ENCODE measurements at regions of chr2 and their contacts with region 1.

Region 1: DNA sequence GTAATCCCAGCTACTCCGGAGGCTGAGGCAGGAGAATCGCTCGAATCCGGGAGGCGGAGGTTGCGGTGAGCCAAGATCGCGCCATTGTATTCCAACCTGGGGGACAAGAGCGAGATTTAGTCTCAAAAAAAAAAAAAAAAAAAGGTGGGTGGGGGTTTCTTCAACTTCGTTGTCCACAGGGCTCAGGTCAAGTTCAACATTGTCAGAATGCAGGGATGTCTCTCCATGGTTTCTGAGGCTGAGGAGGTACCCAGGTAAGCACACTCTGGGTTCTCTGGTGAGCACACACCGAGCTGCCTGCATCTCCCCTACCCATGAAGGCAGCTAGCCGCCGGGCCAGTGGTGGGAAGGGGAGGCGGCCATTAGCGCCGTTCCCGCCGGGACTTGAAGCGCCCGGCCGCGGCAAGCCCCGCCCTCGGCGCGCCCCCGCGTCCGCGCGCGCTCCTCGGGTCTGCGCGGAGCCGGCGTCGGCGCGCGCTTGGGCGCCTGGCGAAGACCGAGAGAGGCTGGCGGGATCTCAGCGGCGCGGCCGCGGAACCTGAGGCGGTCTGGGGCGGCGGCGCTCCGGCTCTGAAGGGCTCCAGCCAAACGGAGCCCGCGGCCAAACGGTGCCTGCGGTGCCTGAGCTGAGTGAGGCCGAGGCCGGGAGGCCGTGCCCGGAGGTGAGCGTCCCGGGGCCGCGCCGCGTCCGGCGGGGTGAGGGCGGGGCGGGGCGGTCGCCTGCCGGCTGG is at the start of gene UBXN2A:
- DNase-seq: peak; percentile 54 to 93 (median 66)
- ATAC-seq: peak; percentile 86
- H3K4me3 ChIP-seq: peak within 1 kb of the TSS; percentile 88
- H3K4me3 Mint-ChIP-seq: peak within 1 kb of the TSS; percentile 94
- H3K27ac ChIP-seq: peak within 1 kb of the TSS in 1 of 2 donors; percentile 15
- H3K27ac Mint-ChIP-seq: peak within 1 kb of the TSS; percentile 76
- H3K4me1 ChIP-seq: peaks cover 19% of the 10 kb centered on the region
- H3K4me1 Mint-ChIP-seq: peaks cover 30% of the 10 kb centered on the region
- H3K27me3 ChIP-seq: no peaks in the 10 kb centered on the region
- H3K27me3 Mint-ChIP-seq: no peaks in the 10 kb centered on the region
- CTCF ChIP-seq: no peak
- total RNA-seq, gene UBXN2A: 12.9 to 16.7 TPM

Region 2: DNA sequence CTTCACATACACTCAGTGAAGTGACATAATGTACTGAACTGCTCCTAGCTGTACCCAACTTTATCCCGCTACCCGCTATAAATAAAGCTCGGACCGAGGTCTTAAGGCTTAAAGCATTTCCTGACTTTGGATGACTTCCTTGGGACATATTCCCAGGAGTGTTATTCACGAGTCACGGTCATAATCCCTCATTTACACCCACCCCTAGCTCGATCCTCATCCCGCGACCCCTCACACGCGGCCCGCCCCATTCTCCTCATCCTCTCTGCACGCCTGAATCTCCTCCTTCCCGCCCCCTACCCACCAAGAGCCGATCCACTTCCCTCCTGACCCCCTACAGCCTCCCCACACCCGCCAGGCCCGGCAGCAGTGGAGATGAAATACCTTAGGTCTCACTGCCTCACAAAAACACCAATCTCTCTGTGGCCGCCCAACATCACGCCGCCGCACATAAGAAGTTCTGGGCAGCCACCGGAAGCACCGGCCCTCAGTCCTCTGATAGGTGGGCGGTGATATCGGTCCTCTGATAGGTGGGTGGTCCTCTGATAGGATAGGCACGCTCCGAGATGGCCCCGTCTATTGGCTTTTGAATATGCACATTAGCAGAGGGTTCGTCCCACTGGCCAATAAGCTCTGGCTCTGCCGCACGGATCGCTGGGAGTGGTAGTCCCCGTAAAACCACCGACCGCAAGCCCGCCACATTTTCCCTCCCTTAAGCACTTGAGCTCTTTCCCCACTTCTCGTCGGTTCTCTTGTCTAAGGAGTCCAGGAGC is 107.0 kb after region 1 on chr2 and contains the start of gene WDCP:
- CTCF ChIA-PET with region 1: no interaction called
- POLR2A ChIA-PET with region 1: interaction called, 5 read pairs
- intact Hi-C with region 1: loop called in 1 of 2 experiments (anchors 5 kb)
- DNase-seq: peak; percentile 82 to 98 (median 88)
- ATAC-seq: peak; percentile 99
- H3K4me3 ChIP-seq: peak within 1 kb of the TSS; percentile 83
- H3K4me3 Mint-ChIP-seq: peak within 1 kb of the TSS; percentile 94
- H3K27ac ChIP-seq: peak within 1 kb of the TSS in 1 of 2 donors; percentile 22
- H3K27ac Mint-ChIP-seq: peak within 1 kb of the TSS; percentile 79
- H3K4me1 ChIP-seq: peaks cover 30% of the 10 kb centered on the region
- H3K4me1 Mint-ChIP-seq: peaks cover 36% of the 10 kb centered on the region
- H3K27me3 ChIP-seq: peaks cover 10 to 21% of the 10 kb centered on the region in 2 experiments
- H3K27me3 Mint-ChIP-seq: peaks cover 10% of the 10 kb centered on the region
- CTCF ChIP-seq: no peak
- total RNA-seq, gene WDCP: 1.4 to 2.0 TPM

Region 3: DNA sequence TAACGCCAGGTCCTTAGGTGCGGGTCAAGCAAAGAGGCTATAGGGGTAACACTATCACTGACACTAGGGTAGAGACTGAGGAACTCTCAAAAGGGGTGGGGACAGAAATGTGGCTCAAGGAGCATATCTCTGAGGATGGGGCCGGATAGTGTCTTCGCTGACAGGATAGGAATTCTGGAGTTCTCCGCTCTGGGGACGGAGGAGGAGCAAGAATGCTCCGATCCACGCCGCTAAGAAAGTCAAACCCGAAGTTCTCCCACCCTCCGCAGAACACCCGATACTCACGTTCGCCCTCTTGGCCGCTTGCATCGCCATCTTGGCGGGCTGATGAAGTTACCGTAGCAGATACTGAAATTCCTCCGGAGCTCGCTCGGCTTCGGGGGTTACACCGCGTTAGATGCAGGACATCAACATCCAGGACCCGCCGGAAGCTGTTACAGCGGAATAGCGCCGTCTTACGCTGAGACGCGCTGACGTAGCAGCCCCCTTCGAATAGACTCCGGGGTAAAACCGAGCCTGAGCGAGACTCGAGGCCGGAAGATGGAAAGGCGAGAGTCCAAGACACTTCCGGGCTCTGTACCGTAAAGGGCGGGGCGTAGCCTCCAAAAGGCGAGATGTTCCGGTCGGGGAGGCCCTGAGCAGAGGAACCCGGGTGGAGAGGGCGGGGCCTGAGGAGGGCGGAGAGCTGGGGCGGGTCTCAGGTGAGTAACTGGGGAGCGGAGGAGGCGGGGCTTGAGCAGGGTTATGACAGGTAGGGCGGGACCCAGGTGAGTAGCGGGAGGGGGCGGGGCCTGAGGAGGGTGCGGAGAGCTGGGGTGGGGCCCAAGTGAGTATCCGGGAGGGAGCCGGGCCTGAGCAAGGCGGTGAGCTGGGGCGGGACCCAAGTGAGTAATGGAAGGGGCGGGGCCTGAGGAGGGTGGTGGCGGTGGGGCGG is 136.0 kb after region 1 on chr2 and contains the start of gene SF3B6:
- CTCF ChIA-PET with region 1: interaction called, 4 read pairs
- POLR2A ChIA-PET with region 1: interaction called, 9 read pairs
- intact Hi-C with region 1: loop called in 1 of 2 experiments (anchors 2 kb)
- DNase-seq: peak; percentile 98 to 100 (median 100)
- ATAC-seq: peak; percentile 81
- H3K4me3 ChIP-seq: peak within 1 kb of the TSS; percentile 93
- H3K4me3 Mint-ChIP-seq: peak within 1 kb of the TSS; percentile 97
- H3K27ac ChIP-seq: peak within 1 kb of the TSS; percentile 86 to 95
- H3K27ac Mint-ChIP-seq: peak within 1 kb of the TSS; percentile 98
- H3K4me1 ChIP-seq: peaks cover 27% of the 10 kb centered on the region
- H3K4me1 Mint-ChIP-seq: peaks cover 41% of the 10 kb centered on the region
- H3K27me3 ChIP-seq: no peaks in the 10 kb centered on the region
- H3K27me3 Mint-ChIP-seq: no peaks in the 10 kb centered on the region
- CTCF ChIP-seq: no peak
- total RNA-seq, gene SF3B6: 59.8 to 62.6 TPM

Region 4: DNA sequence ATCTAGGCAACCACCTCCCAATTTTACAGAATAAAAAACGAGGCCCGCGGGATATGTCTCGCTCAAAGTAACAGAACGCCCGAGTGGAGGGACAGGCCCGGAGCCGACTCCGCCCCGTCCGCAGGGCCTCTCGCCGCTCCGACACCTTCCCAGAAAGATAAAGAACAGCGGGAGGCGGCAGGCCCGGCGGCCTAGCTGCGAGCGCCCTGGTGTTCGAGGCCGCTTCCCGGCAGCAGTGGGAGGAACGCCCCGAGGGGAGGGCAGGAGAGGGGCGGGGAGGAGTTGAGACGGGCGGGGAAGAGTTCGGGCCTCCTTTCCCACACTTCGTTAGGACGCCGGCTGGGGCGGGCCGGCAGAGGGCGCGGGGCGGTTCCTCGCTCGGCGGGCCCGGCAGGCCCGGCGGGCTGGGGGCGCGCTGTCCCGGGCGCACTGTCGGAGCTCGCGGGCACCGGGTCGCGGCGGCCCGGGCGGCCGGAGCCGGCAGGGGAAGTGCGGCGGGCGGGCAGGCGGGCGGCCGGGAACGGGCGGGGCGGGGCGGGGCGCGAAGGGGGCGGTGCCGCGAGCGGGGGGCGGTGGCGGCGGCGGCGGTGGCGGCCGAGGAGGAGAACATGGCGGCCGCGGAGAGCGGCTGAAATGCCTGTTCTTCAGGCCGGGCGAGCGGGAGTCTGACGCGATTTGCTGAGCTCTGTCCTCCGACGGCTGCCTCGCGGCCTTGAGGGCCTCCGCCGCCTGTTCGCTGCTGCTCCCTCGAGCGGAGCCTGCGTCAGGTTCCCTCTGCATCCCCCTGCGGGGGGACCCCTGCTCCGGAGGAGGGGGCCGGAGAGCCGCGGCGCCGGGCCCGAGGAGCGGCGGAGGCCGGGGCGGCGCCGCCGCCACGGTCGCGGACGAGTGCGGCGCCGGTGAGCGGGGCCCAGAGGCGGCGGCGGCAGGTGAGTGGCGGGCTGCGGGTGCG is 550.8 kb after region 1 on chr2 and contains the start of gene NCOA1:
- CTCF ChIA-PET with region 1: no interaction called
- POLR2A ChIA-PET with region 1: no interaction called
- intact Hi-C with region 1: loop called in 1 of 2 experiments (anchors 10 kb)
- DNase-seq: peak; percentile 83 to 95 (median 88)
- ATAC-seq: peak; percentile 85
- H3K4me3 ChIP-seq: peak within 1 kb of the TSS; percentile 60
- H3K4me3 Mint-ChIP-seq: peak within 1 kb of the TSS; percentile 92
- H3K27ac ChIP-seq: peak within 1 kb of the TSS; percentile 76 to 81
- H3K27ac Mint-ChIP-seq: peak within 1 kb of the TSS; percentile 94
- H3K4me1 ChIP-seq: peaks cover 34% of the 10 kb centered on the region
- H3K4me1 Mint-ChIP-seq: peaks cover 66% of the 10 kb centered on the region
- H3K27me3 ChIP-seq: no peaks in the 10 kb centered on the region
- H3K27me3 Mint-ChIP-seq: no peaks in the 10 kb centered on the region
- CTCF ChIP-seq: no peak
- total RNA-seq, gene NCOA1: 35.5 to 40.6 TPM

Region 5: DNA sequence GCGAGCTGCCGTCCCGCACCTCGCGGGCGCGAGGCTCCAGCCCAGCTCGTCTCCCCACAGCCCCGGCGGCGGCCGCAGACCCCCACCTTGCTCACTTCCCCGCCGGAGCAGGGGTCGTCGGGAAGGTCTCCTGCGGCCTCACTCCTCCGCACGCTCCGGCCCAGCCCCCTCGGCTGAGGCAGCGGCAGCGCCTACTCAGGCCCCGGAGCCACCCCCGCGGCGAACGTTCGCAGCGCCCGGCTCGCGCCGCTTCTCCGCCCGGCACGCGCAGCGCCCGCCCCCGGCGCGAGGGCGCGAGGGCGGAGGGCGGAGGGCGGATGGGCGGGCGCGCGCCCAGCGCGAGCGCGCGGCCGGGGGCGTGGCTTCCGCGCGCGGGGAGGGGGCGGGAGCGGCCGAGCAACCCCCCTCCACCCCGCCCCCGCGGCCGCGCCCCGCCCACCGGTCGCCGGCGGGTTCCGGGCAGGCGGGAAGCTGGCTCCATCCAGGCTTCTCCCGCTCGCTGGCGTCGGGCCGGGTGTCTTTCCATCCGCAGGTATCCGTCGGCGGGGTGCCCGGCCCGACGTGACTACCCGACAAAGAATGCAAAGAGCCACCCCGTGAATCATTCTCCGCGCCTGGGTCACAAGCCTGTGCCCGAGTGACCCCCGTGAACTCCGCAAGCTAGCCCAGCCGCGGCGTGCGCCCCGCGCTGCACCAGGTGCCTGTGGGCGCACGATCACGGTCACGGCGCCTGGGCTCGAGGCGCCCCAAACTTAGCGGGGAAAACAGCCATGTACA is 1733.3 kb after region 1 on chr2 and contains the start of gene DTNB:
- CTCF ChIA-PET with region 1: no interaction called
- POLR2A ChIA-PET with region 1: no interaction called
- intact Hi-C with region 1: loop called in 1 of 2 experiments (anchors 5 kb)
- DNase-seq: peak; percentile 58 to 92 (median 76)
- ATAC-seq: peak; percentile 75
- H3K4me3 ChIP-seq: peak within 1 kb of the TSS; percentile 84
- H3K4me3 Mint-ChIP-seq: peak within 1 kb of the TSS; percentile 91
- H3K27ac ChIP-seq: peak within 1 kb of the TSS; percentile 43 to 66
- H3K27ac Mint-ChIP-seq: peak within 1 kb of the TSS; percentile 85
- H3K4me1 ChIP-seq: peaks cover 23% of the 10 kb centered on the region
- H3K4me1 Mint-ChIP-seq: peaks cover 35% of the 10 kb centered on the region
- H3K27me3 ChIP-seq: peaks cover 0 to 2% of the 10 kb centered on the region in 2 experiments
- H3K27me3 Mint-ChIP-seq: no peaks in the 10 kb centered on the region
- CTCF ChIP-seq: no peak
- total RNA-seq, gene DTNB: 30.1 to 33.6 TPM

Measured in CD4-positive, alpha-beta T cell (primary cell).